Mammary epithelial cell (primary cell): ENCODE measurements at regions of chr13 and their contacts with region 1.

Region 1: DNA sequence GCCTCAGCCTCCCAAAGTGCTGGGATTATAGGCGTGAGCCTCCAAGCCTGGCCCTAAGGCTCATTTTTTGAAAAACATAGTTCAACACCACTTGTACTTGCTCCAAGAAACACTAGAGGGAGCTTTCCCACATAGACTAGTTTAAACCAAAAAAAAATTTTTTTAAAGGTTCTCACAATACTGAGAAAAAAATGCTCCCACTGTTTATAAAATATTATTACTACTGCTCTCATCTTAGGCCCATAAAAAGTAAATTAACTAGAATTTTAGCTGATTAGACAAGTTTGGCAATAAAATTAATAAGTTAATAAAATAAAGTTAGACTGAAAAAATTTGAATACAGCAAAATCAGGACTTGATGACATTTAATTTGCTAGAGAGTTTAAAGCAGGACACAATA is 109.5 kb downstream of the TBC1D4 start:
- DNase-seq: no peak
- H3K4me3 ChIP-seq: no peak overlapping the region
- H3K27ac ChIP-seq: no peak overlapping the region
- H3K4me1 ChIP-seq: peaks cover 19% of the 10 kb centered on the region
- H3K27me3 ChIP-seq: no peaks in the 10 kb centered on the region
- CTCF ChIP-seq: peak; percentile 63 to 74

Region 2: DNA sequence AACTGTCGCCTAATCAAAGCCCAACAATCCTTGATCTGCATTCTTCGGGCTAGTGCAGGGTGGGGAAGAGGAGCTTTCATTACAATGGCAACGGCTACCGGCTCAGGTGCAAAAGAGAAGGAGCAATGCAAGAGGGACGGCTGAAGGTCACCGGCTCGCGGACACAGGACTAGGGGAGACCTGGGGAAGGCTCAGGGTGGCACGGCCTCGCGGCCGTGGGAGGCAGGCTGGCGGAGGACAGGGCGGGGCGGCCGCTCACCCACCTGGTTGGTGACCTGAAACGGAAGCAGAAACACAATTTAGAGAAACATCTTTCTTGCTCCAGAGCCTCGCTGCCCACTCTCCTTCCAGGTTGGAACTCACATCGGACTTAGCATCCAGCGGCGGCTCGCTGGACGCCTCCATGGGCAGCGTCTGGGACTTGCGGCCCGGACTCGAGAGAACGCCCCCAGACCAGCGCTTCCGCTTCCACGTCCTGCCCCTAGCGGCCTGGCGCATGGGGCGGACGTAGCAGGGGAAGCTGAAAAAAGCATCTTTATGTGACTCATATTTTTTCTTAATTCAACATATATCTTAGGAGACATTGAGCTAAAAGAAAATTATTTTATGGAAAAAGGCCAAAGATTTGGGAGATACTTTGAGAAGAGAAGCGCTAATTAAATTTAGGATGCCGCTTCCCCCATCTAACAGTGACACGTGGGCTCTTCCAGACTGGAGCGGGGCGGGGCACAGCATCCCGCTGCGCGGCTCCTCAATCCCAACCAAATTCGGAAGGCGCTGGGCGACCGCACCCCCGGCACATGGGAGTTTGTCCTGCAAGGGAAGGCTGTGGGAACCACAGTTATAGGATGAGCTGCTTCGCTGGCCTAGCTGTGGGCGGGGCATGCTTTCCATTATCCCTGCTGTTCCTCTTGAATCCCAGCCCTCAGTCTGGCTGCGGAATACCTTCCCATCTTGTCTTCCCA is 165.2 kb after region 1 on chr13 and contains the start of gene COMMD6:
- CTCF ChIA-PET with region 1: no interaction called
- dilution Hi-C with region 1: no loop called
- in situ Hi-C with region 1: loop called in 1 of 2 experiments (anchors 10 kb)
- intact Hi-C with region 1: loop called (anchors 2 kb)
- DNase-seq: peak; percentile 86
- H3K4me3 ChIP-seq: peak within 1 kb of the TSS; percentile 62 to 93 (median 79)
- H3K27ac ChIP-seq: peak within 1 kb of the TSS; percentile 81
- H3K4me1 ChIP-seq: peaks cover 17% of the 10 kb centered on the region
- H3K27me3 ChIP-seq: no peaks in the 10 kb centered on the region
- CTCF ChIP-seq: peak in 1 of 2 donors; percentile 26
- total RNA-seq, gene COMMD6: 27.3 to 115 TPM

Region 3: GRCh38 chr13:75549262-75550158 is 177.0 kb after region 1 on chr13 and contains the start of gene UCHL3:
- CTCF ChIA-PET with region 1: no interaction called
- dilution Hi-C with region 1: no loop called
- in situ Hi-C with region 1: loop called in 1 of 2 experiments (anchors 10 kb)
- intact Hi-C with region 1: loop called (anchors 1 kb)
- DNase-seq: peak; percentile 91
- H3K4me3 ChIP-seq: peak within 1 kb of the TSS; percentile 78 to 98 (median 84)
- H3K27ac ChIP-seq: peak within 1 kb of the TSS; percentile 95
- H3K4me1 ChIP-seq: peaks cover 13% of the 10 kb centered on the region
- H3K27me3 ChIP-seq: no peaks in the 10 kb centered on the region
- CTCF ChIP-seq: peak; percentile 78 to 94
- total RNA-seq, gene UCHL3: 82.3 to 85.4 TPM